ENCODE measurements at regions of chr5 and their contacts with region 1.

Region 1: GRCh38 chr5:139787568-139788293 is 7.9 kb upstream of the PSD2 start:
- DNase-seq: peak; percentile 92
- ATAC-seq: peak; percentile 91
- H3K4me3 Mint-ChIP-seq: peak overlapping the region; percentile 73
- H3K27ac Mint-ChIP-seq: no peak overlapping the region
- H3K4me1 Mint-ChIP-seq: peaks cover 3% of the 10 kb centered on the region
- H3K27me3 Mint-ChIP-seq: peaks cover 17% of the 10 kb centered on the region

Region 2: GRCh38 chr5:139430015-139430414 is 357.7 kb before region 1 on chr5:
- CTCF ChIA-PET with region 1: no interaction called
- POLR2A ChIA-PET with region 1: no interaction called
- intact Hi-C with region 1: no loop called
- DNase-seq: no peak
- ATAC-seq: peak; percentile 65
- H3K4me3 Mint-ChIP-seq: no peak overlapping the region
- H3K27ac Mint-ChIP-seq: peak overlapping the region; percentile 73
- H3K4me1 Mint-ChIP-seq: peaks cover 15% of the 10 kb centered on the region
- H3K27me3 Mint-ChIP-seq: no peaks in the 10 kb centered on the region

Region 3: GRCh38 chr5:139725073-139725830 is 62.5 kb before region 1 on chr5:
- CTCF ChIA-PET with region 1: no interaction called
- POLR2A ChIA-PET with region 1: no interaction called
- intact Hi-C with region 1: no loop called
- DNase-seq: no peak
- ATAC-seq: no peak
- H3K4me3 Mint-ChIP-seq: no peak overlapping the region
- H3K27ac Mint-ChIP-seq: no peak overlapping the region
- H3K4me1 Mint-ChIP-seq: no peaks in the 10 kb centered on the region
- H3K27me3 Mint-ChIP-seq: no peaks in the 10 kb centered on the region

Region 4: DNA sequence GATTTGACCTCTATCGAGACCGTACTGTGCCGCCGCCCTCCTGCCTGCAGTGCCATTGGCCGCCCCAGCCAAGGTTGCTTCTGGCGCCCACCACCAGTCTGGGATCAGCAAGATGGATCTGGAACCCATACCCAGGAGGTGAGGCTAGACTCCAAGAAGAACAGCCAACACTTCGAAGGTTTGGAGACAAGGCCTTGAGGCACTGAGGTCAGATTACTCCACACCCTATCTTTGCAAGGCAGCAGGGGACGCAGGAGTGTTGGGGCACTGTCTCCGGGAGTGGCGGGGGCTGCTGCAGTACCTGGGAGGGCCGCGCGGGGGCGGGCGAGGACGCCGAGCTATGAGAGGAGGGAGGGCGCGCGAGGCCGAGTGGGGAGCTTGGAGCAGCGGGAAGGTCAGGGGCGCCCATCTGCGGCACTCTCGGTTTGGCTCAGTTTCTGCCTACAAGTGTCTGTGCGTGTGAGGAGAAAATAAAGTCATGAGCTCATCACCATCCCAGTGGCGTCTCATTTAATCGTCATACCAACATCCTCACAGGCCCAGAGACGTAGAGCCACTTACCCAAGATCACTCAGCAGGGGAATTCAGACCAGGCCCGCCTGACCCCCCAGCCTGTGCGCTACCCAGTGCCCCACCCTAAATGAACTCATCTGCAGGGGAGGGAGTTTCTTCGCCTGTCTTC is 12.6 kb before region 1 on chr5:
- CTCF ChIA-PET with region 1: interaction called, 57 read pairs
- POLR2A ChIA-PET with region 1: no interaction called
- intact Hi-C with region 1: no loop called
- DNase-seq: peak; percentile 92
- ATAC-seq: peak; percentile 95
- H3K4me3 Mint-ChIP-seq: no peak overlapping the region
- H3K27ac Mint-ChIP-seq: peak overlapping the region; percentile 58
- H3K4me1 Mint-ChIP-seq: peaks cover 10% of the 10 kb centered on the region
- H3K27me3 Mint-ChIP-seq: peaks cover 9% of the 10 kb centered on the region

Region 5: DNA sequence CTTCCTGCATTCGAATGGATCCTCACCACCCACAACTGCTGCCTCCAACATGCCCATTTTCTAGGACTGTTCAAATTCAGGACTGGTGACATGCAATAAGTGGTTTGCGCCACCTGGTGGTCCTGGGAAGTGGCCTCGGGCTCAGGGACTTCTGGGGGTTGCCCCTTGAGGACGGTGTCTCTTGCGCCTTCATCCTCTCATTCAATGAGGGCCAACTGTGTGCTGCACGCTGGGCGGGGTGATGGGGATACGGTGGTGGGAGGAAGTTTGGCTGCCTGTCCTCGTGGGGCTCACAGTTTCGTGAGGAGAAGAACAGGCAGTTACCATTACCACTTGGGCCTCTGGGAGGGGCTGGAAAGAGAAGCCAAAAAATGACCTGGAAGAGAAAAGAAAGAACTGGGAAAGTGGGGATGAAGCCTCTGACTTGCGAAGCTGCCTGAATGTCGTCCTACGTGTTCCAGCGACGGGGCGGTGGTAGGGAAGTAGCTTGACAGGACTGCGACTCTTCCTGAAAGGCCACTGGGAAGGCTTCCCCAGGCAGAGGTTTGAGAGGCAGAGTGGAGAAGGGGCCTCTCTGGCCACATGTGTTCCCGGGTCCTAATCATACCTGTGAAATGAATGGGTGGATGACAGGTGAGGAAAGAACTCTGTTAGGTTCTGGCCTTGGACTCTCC is 56.9 kb after region 1 on chr5:
- CTCF ChIA-PET with region 1: interaction called, 42 read pairs
- POLR2A ChIA-PET with region 1: no interaction called
- intact Hi-C with region 1: loop called (anchors 1 kb)
- DNase-seq: peak; percentile 88
- ATAC-seq: peak; percentile 47
- H3K4me3 Mint-ChIP-seq: no peak overlapping the region
- H3K27ac Mint-ChIP-seq: no peak overlapping the region
- H3K4me1 Mint-ChIP-seq: peaks cover 7% of the 10 kb centered on the region
- H3K27me3 Mint-ChIP-seq: peaks cover 24% of the 10 kb centered on the region

Region 6: GRCh38 chr5:139863855-139864558 is 76.3 kb after region 1 on chr5:
- CTCF ChIA-PET with region 1: interaction called, 25 read pairs
- POLR2A ChIA-PET with region 1: no interaction called
- intact Hi-C with region 1: loop called (anchors 1 kb)
- DNase-seq: peak; percentile 75
- ATAC-seq: peak; percentile 68
- H3K4me3 Mint-ChIP-seq: no peak overlapping the region
- H3K27ac Mint-ChIP-seq: no peak overlapping the region
- H3K4me1 Mint-ChIP-seq: no peaks in the 10 kb centered on the region
- H3K27me3 Mint-ChIP-seq: peaks cover 12% of the 10 kb centered on the region

Region 7: DNA sequence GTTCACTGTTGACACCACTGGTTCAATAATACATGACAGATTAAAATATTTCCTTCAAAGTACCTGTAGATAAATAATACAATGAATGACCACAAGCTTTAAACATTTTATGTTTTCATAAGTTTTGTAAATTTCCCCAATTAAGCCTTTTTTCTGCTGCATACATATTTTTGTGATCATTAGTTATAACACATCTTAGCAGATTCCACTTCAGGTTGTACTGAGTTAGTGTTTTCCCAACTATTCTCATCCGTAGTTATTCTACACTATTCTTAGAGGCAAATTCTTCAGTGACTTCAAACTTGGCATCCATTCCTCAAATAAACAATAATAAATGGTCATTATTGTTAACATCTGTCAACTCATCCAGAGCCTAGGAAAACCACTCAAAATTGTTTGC is 154.5 kb after region 1 on chr5:
- CTCF ChIA-PET with region 1: no interaction called
- POLR2A ChIA-PET with region 1: no interaction called
- intact Hi-C with region 1: no loop called
- DNase-seq: no peak
- ATAC-seq: no peak
- H3K4me3 Mint-ChIP-seq: no peak overlapping the region
- H3K27ac Mint-ChIP-seq: no peak overlapping the region
- H3K4me1 Mint-ChIP-seq: no peaks in the 10 kb centered on the region
- H3K27me3 Mint-ChIP-seq: peaks cover 43% of the 10 kb centered on the region

Region 8: DNA sequence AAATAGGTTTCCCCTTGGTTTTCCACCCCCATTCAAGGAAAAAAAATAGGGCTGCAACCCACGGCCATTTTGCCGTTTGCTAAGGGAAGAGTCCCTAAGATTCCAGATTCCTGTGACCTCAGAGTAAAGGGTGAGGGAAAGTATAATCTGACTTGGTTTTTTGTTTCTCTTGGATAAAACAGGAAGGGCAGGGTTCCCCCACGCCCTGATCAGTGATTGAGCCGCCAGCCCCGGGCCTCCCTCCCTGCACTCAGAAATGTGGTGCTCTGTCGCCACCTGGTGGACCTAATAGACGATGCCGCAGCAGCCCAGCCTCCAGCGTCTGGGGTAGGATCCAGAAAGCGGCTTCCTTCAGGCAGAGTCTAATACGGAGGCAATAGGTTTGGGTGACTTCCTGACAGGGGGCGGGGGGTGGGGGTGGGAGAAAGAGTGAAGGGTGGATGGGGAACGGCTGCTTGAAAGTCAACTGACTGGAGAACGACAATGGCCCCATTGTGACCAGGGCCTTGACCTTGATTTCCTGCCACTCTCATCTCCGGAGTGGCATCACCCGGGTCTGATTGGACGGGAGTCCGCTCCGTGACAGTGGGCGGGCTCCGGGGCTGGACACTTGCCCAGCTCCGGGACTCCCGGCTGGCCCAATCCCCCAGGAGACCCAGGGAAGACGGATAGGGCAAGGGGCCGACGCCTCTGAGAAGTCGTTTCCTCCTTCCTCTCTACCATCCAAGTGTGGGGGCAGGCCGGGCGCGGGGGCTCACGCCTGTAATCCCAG is 369.5 kb after region 1 on chr5:
- CTCF ChIA-PET with region 1: interaction called, 4 read pairs
- POLR2A ChIA-PET with region 1: no interaction called
- intact Hi-C with region 1: loop called (anchors 1 kb)
- DNase-seq: peak; percentile 94
- ATAC-seq: peak; percentile 99
- H3K4me3 Mint-ChIP-seq: peak overlapping the region; percentile 22
- H3K27ac Mint-ChIP-seq: peak overlapping the region; percentile 49
- H3K4me1 Mint-ChIP-seq: peaks cover 5% of the 10 kb centered on the region
- H3K27me3 Mint-ChIP-seq: no peaks in the 10 kb centered on the region